ENCODE measurements at regions of chr6 and their contacts with region 1.

Region 1: DNA sequence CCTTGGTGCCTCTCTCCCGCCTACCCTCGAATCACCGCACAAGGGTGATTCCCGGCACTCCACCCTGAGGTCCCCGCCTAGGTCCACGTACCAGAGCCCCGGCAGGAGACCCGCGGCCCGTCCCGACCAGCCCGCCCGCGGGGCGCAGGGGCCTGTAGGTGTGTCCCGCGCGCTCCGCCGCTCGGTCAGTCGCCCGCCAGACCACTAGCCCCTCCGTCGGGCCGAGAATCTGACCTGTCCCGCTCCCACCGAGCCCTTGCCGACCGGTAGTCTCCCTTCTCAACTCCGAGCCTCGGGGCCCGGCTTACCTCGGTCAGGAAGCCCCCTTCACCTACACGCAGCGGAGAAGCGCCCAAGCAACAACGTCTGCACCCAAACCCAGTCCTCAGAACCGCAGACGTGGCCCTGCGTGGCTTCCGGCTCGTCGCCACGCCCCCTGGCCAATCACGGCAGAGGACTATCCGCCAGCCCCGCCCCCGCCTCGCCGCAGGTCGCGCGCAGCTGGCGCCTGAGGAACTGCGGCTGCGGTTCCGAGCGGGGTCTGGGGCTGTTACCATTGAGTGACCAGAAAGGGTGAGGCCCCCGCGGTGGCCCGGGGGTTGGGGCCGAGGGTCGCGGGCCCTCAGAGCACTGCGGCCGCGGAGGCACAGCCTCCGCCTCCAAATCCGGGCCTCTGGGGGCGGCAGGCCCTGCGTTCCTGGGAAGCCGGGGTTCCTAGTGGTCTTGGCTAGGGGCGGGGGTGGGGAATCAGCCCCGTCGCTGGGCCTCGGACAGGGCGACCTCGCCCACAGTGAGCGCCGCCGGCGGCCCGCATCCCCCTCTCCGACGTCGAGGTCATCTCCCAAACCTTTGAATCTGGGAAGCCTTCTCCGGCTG is at the starts of genes PGM3 and RWDD2A:
- DNase-seq: peak; percentile 92 to 95 (median 93)
- ATAC-seq: peak; percentile 97 to 100 (median 99)
- H3K4me3 ChIP-seq: peak within 1 kb of the TSS; percentile 66 to 99 (median 82)
- H3K27ac ChIP-seq: peak within 1 kb of the TSS; percentile 27 to 90 (median 73)
- H3K4me1 ChIP-seq: peaks cover 0 to 29% (median 16%) of the 10 kb centered on the region in 12 donors
- H3K27me3 ChIP-seq: no peaks in the 10 kb centered on the region
- CTCF ChIP-seq: no peak
- POLR2A ChIP-seq: peak; percentile 1 to 87
- total RNA-seq, gene PGM3: 7.3 to 25.1 (median 15.8) TPM
- total RNA-seq, gene RWDD2A: 1.6 to 4.8 (median 3.4) TPM

Region 2: DNA sequence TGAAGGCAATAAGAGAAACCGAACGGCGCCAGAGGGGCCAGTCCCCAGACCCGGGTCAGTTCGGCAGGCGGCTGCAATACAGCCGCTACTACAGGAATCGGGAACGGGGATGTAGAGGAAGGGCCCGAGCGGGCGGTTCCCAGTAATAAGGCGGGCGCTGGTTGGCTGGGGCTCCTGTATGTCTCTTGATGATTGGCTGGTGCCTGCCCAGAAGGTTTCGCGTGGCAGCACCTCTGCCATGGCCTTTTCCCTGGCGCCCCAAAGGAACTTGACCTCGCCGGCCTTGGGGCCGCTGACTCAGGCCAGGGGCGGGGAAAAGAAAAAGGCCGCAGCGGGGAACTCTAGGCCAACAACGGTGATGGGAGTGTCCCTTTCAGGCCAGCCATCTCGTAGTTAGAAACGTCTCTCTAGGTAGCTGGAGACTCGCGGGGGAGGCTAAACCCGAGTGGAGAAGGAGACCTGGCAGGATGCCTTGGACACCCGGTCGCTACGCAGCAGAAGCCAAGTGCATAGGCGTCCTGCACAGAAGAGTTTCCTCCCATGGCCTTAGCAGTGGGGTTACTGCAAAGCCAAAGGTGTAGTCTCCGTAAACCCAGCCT is 945.4 kb before region 1 on chr6 and contains the start of gene IBTK:
- intact Hi-C with region 1: loop called in 3 of 10 experiments (anchors 10 kb)
- DNase-seq: peak; percentile 95 to 96 (median 96)
- ATAC-seq: peak; percentile 98 to 99 (median 99)
- H3K4me3 ChIP-seq: peak within 1 kb of the TSS; percentile 65 to 98 (median 78)
- H3K27ac ChIP-seq: peak within 1 kb of the TSS; percentile 88 to 97 (median 92)
- H3K4me1 ChIP-seq: peaks cover 0 to 48% (median 22%) of the 10 kb centered on the region in 12 donors
- H3K27me3 ChIP-seq: no peaks in the 10 kb centered on the region
- CTCF ChIP-seq: no peak
- POLR2A ChIP-seq: peak; percentile 46 to 78
- total RNA-seq, gene IBTK: 19.4 to 39.2 (median 29.2) TPM

Region 3: GRCh38 chr6:82257088-82257772 is 935.9 kb before region 1 on chr6:
- intact Hi-C with region 1: loop called in 1 of 10 experiments (anchors 10 kb)
- DNase-seq: no peak
- ATAC-seq: no peak
- H3K4me3 ChIP-seq: no peak overlapping the region
- H3K27ac ChIP-seq: no peak overlapping the region
- H3K4me1 ChIP-seq: peaks cover 0 to 22% (median 1%) of the 10 kb centered on the region in 12 donors
- H3K27me3 ChIP-seq: no peaks in the 10 kb centered on the region
- CTCF ChIP-seq: no peak
- POLR2A ChIP-seq: no peak

Region 4: GRCh38 chr6:82363351-82364086 is 829.6 kb before region 1 on chr6 and contains the start of gene TPBG:
- intact Hi-C with region 1: loop called in 2 of 10 experiments (anchors 10 kb)
- DNase-seq: peak; percentile 44 to 70 (median 45)
- ATAC-seq: peak; percentile 74 to 84 (median 78)
- H3K4me3 ChIP-seq: peak within 1 kb of the TSS; percentile 35 to 76 (median 64)
- H3K27ac ChIP-seq: peak within 1 kb of the TSS in 11 of 12 donors; percentile 35 to 80 (median 75)
- H3K4me1 ChIP-seq: peaks cover 0 to 25% (median 6%) of the 10 kb centered on the region in 12 donors
- H3K27me3 ChIP-seq: peaks cover 0 to 63% (median 17%) of the 10 kb centered on the region in 9 donors
- CTCF ChIP-seq: peak in 4 of 12 donors; percentile 10 to 29 (median 22)
- POLR2A ChIP-seq: no peak
- total RNA-seq, gene TPBG: 1.4 to 10.0 (median 2.8) TPM

Region 5: GRCh38 chr6:83313882-83314281 is 120.8 kb after region 1 on chr6:
- intact Hi-C with region 1: no loop called
- DNase-seq: no peak
- ATAC-seq: no peak
- H3K4me3 ChIP-seq: no peak overlapping the region
- H3K27ac ChIP-seq: no peak overlapping the region
- H3K4me1 ChIP-seq: no peaks in the 10 kb centered on the region
- H3K27me3 ChIP-seq: no peaks in the 10 kb centered on the region
- CTCF ChIP-seq: no peak
- POLR2A ChIP-seq: no peak